Lower leg skin (tissue), 4 donors: ENCODE measurements at regions of chr14 and their contacts with region 1.

Region 1: DNA sequence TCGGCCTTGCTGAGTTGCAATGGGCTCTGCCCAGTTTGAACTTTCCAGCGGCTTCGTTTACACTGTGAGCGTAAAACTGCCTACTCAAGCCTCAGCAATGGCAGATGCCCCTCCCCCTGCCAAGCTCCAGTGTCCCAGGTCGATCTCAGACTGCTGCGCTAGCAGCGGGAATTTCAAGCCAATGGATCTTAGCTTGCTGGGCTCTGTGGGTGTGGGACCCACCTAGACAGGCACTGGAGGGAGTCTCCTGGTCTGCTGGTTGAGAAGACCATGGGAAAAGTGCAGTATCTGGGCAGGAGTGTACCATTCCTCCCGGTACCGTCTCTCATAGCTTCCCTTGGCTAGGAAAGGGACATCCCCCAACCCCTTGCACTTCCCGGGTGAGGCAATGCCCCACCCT is 88.2 kb downstream of the KLHL28 start:
- DNase-seq: no peak
- H3K4me3 ChIP-seq: no peak overlapping the region
- CTCF ChIP-seq: no peak
- POLR2A ChIP-seq: no peak

Region 2: GRCh38 chr14:45060551-45060950 is 187.0 kb after region 1 on chr14:
- intact Hi-C with region 1: loop called (anchors 5 kb)
- DNase-seq: no peak
- H3K4me3 ChIP-seq: no peak overlapping the region
- CTCF ChIP-seq: no peak
- POLR2A ChIP-seq: no peak

Region 3: DNA sequence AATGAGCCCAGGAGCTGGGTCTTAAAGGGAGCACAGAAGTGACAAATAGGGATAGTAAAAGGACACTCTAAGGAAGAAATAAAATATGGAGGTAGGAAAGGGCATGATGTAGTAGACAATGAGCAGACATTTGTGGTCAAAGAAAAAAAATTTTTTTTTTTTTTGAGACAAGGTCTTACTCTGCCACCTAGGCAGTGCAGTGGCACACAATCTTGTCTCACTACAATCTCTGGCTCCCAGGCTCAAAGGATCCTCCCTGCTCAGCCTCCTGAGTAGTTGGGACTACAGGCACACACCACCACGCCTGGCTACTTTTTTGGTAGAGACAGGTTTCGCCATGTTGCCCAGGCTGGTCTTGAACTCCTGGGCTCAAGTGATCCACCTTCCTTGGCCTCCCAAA is 252.2 kb after region 1 on chr14:
- intact Hi-C with region 1: no loop called
- DNase-seq: no peak
- H3K4me3 ChIP-seq: no peak overlapping the region
- CTCF ChIP-seq: no peak
- POLR2A ChIP-seq: no peak